Right cardiac atrium (tissue), 5 donors: ENCODE measurements at regions of chr1 and their contacts with region 1.

Region 1: GRCh38 chr1:213419369-213420030 is 368.5 kb downstream of the RPS6KC1 start:
- DNase-seq: no peak
- ATAC-seq: peak; percentile 22 to 38
- H3K4me3 ChIP-seq: no peak overlapping the region
- H3K27ac ChIP-seq: no peak overlapping the region
- H3K4me1 ChIP-seq: no peaks in the 10 kb centered on the region
- H3K27me3 ChIP-seq: no peaks in the 10 kb centered on the region

Region 2: GRCh38 chr1:213374369-213374768 is 45.1 kb before region 1 on chr1:
- intact Hi-C with region 1: loop called in 1 of 4 experiments (anchors 2 kb)
- DNase-seq: peak; percentile 46 to 79 (median 68)
- ATAC-seq: peak; percentile 64 to 66
- H3K4me3 ChIP-seq: no peak overlapping the region
- H3K27ac ChIP-seq: no peak overlapping the region
- H3K4me1 ChIP-seq: no peaks in the 10 kb centered on the region
- H3K27me3 ChIP-seq: no peaks in the 10 kb centered on the region

Region 3: DNA sequence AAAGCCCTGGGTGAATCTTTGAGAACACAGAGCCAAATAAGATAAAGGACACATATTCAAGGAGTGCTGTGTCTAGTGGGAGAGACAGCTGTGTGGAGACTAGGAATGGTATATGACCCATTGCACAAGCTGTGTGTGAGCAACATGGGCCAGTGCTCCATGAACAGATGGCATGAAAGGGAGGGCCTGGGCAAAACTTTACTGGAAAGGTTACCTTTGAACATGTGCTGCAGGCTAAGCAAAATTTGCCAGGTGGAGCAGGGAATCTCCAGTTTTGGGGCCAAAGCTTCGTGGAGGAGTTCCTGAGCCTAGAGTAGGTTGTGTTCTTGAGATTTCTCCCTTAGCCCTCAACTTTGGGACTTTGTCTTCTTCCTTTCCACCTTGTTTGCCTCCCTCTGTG is 122.1 kb after region 1 on chr1:
- intact Hi-C with region 1: no loop called
- DNase-seq: no peak
- ATAC-seq: no peak
- H3K4me3 ChIP-seq: no peak overlapping the region
- H3K27ac ChIP-seq: no peak overlapping the region
- H3K4me1 ChIP-seq: no peaks in the 10 kb centered on the region
- H3K27me3 ChIP-seq: no peaks in the 10 kb centered on the region